ENCODE measurements at regions of chr1 and their contacts with region 1.

Region 1: DNA sequence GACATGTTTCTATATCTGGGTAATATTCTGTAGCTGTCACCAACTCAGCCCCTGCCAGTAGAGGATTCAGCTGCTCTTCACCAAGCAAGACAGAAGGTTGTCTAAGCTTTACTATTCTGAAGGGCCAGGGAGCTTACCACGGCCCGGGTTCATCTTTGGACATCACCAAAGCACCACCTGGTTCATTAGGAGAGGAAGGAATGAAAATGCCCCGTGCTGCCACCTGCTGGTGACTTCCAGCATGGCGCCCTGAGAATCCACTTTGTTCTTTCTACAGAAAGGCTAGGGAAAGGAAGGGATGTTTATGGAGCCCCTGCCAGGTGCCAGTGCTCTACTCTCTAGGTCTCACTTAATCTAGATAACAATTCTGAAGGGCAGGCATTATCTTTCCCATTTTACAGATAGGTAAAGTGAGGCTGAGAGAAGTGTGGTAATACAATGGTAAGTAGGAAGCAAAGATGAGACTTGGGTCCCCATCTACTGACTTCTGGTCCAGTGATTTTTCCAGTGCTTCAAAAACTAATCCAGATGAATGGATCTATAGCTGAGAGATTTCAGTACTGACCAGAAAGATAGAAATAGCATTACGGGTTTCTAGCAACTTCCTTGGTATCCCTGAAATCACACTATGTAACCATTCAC is 79.5 kb downstream of the BEND5 start:
- DNase-seq: peak; percentile 63

Region 2: DNA sequence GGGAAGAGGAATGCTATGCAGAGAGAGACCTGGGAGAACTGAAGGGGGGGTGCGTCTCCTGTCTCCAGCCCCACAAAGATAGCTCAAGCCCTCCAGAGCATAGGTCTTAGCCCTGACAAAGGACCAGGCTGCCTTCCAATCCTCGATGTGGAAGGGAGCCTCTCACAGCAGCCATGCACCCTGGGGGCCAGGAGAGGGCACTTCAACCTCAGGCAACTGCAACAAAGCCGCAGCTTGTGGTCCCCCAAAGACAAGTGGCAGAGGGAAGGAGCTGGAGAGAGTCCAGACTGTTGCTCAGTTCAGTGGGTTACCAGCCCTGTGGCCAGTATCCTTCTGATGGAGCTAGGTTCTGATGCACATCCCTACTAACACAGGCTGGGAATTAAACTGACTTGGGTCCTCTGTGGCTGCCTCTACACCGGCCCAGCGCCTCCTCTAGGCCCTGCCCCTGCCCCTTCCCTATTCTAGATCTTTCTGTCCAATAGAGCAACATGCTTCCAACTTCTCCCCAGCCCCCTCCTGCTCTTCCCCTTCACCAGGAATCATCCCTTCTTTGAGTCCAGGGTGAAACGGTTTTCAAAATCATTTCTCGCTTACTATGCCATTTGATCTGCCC is 124.4 kb before region 1 on chr1:
- intact Hi-C with region 1: loop called (anchors 1 kb)
- DNase-seq: no peak